ENCODE measurements at regions of chr4 and their contacts with region 1.

Region 1: DNA sequence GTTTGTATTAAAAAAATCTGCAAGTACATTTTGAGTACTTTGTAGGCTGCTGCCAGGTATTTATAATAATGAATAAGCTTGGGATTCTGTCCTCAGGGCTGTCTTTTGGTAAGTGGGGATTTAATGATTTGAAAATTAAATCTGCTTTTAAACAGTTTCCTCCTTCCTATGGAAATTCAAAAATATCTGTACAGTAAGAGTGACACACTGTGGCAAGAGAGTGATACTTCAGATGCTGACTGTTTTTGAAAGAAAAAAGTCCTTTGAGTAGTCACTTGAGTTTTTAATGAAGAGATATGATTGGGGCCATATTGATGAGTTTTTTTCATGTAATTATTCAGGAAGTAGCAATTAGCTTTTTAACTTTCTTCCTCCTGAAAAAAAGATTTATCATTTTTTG is 49.2 kb downstream of the SMARCAD1 start:
- DNase-seq: no peak
- ATAC-seq: no peak

Region 2: DNA sequence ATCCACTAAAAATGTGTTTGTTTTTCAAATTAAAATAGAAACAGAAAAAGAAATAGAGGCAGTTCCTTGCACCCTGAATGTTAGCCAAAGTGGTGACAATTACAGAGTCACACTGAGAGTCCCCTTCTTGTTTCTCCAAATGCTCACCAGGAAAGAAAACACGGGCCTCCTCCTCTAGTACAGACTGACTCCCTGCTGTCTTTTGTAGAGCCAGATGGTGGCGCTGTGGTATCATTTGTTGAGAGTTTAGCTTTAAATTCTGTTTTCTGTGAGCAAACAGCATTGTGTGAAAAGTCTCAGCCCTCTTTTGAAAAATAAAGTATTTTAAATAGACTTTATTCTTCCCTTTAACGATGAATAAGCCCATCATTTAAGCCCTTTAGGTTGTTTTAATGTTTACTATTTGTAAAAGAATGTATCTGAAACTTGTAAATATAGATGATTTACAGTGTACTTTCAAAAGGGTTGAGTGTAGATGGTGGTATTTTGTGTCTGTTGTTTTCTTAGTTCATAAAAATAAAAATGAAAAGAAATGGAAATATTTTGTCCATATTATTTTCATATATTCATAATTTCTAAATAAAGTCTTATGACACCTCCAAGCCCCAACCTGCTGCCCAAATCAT is 465.1 kb before region 1 on chr4:
- intact Hi-C with region 1: loop called in 1 of 2 experiments (anchors 5 kb)
- DNase-seq: peak; percentile 35
- ATAC-seq: peak; percentile 59 to 68

Measured in left cardiac atrium (tissue), 4 donors.